CD8-positive, alpha-beta memory T cell (primary cell): ENCODE measurements at regions of chr2 and their contacts with region 1.

Region 1: DNA sequence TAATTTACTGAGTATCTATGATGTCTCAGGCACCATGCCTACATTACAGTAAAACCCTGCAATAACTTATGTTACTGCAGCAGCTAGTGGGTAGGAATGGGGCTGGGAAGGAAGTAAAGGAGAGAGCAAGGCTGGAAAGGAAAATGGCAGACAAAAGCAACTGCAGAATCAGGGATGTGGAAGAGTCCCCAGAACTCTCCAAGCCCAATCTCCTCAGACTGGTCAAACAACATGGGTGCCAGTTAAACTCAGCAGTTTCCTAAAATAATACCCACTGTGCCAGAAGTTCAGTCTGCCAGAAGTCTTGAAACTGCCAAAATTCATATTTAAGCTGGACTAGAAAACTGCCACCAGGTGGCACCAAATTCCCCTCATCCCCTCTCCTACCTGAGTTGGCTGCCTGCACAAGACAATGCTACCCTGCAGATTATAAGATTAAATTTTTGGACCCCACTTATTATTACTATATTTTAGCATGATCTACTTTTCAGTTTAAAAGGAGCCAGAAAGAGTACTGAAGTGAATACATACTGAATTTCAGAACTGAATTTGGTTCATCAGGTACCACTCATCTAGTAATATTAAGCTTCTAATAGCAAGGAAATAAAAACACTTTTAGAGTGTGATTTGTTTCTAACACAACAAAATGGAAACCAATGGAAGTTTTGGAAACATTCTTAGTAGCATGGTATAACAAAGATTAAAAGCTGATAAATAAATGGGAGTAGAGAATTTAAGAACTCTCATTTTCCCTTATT is 86.8 kb upstream of the DNER start:
- DNase-seq: peak; percentile 30 to 71 (median 52)
- H3K4me3 ChIP-seq: no peak overlapping the region
- H3K4me3 Mint-ChIP-seq: no peak overlapping the region
- H3K27ac ChIP-seq: no peak overlapping the region
- H3K27ac Mint-ChIP-seq: peak overlapping the region in 3 of 8 donors; percentile 35 to 49 (median 37)
- H3K4me1 ChIP-seq: no peaks in the 10 kb centered on the region
- H3K4me1 Mint-ChIP-seq: peaks cover 0 to 6% (median 5%) of the 10 kb centered on the region in 3 donors
- H3K27me3 ChIP-seq: no peaks in the 10 kb centered on the region
- H3K27me3 Mint-ChIP-seq: no peaks in the 10 kb centered on the region

Region 2: GRCh38 chr2:229653531-229653930 is 147.6 kb before region 1 on chr2:
- CTCF ChIA-PET with region 1: no interaction called
- POLR2A ChIA-PET with region 1: no interaction called
- DNase-seq: no peak
- H3K4me3 ChIP-seq: no peak overlapping the region
- H3K4me3 Mint-ChIP-seq: no peak overlapping the region
- H3K27ac ChIP-seq: no peak overlapping the region
- H3K27ac Mint-ChIP-seq: no peak overlapping the region
- H3K4me1 ChIP-seq: no peaks in the 10 kb centered on the region
- H3K4me1 Mint-ChIP-seq: no peaks in the 10 kb centered on the region
- H3K27me3 ChIP-seq: peaks cover 4% of the 10 kb centered on the region
- H3K27me3 Mint-ChIP-seq: peaks cover 5 to 29% of the 10 kb centered on the region in 2 donors

Region 3: GRCh38 chr2:229748950-229749349 is 52.2 kb before region 1 on chr2:
- CTCF ChIA-PET with region 1: no interaction called
- POLR2A ChIA-PET with region 1: no interaction called
- DNase-seq: no peak
- H3K4me3 ChIP-seq: no peak overlapping the region
- H3K4me3 Mint-ChIP-seq: no peak overlapping the region
- H3K27ac ChIP-seq: no peak overlapping the region
- H3K27ac Mint-ChIP-seq: no peak overlapping the region
- H3K4me1 ChIP-seq: no peaks in the 10 kb centered on the region
- H3K4me1 Mint-ChIP-seq: no peaks in the 10 kb centered on the region
- H3K27me3 ChIP-seq: no peaks in the 10 kb centered on the region
- H3K27me3 Mint-ChIP-seq: peaks cover 0 to 13% of the 10 kb centered on the region in 2 donors

Region 4: GRCh38 chr2:229815858-229816257 is 14.7 kb after region 1 on chr2:
- CTCF ChIA-PET with region 1: interaction called, 25 read pairs
- POLR2A ChIA-PET with region 1: no interaction called
- DNase-seq: no peak
- H3K4me3 ChIP-seq: no peak overlapping the region
- H3K4me3 Mint-ChIP-seq: no peak overlapping the region
- H3K27ac ChIP-seq: no peak overlapping the region
- H3K27ac Mint-ChIP-seq: peak overlapping the region in 1 of 8 donors; percentile 7
- H3K4me1 ChIP-seq: no peaks in the 10 kb centered on the region
- H3K4me1 Mint-ChIP-seq: peaks cover 2 to 11% (median 3%) of the 10 kb centered on the region in 3 donors
- H3K27me3 ChIP-seq: no peaks in the 10 kb centered on the region
- H3K27me3 Mint-ChIP-seq: no peaks in the 10 kb centered on the region

Region 5: DNA sequence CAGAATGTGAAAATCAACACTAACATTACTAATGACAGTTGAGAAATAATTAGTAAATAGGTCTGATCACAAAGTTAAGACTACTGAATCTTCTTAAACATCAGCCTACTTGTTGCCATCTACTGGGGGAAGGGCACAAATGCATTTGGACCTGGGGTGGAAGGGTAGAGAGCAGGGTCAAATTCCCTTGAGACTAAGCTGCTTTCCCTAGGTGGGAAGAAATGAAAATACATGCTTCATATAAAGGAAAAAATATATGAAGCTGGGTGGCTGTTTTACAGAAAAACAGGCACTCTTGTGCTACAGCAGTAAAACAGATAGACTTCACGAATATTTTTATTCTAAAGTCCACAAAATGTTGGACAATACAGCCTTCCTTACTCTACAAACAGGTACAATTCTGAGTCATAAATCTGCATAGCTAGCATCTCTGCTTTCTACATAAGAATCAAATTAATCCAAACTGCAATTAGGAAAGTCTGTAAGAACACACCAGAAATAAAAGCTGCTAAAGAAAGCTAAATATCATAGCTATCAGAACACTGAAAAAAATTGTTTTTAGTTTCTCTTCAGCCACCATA is 109.7 kb after region 1 on chr2:
- CTCF ChIA-PET with region 1: interaction called, 49 read pairs
- POLR2A ChIA-PET with region 1: no interaction called
- DNase-seq: peak in 1 of 5 donors; percentile 17
- H3K4me3 ChIP-seq: no peak overlapping the region
- H3K4me3 Mint-ChIP-seq: peak overlapping the region in 3 of 7 donors; percentile 4 to 24 (median 6)
- H3K27ac ChIP-seq: no peak overlapping the region
- H3K27ac Mint-ChIP-seq: peak overlapping the region in 7 of 8 donors; percentile 27 to 89 (median 64)
- H3K4me1 ChIP-seq: peaks cover 46% of the 10 kb centered on the region
- H3K4me1 Mint-ChIP-seq: peaks cover 47 to 73% (median 71%) of the 10 kb centered on the region in 3 donors
- H3K27me3 ChIP-seq: no peaks in the 10 kb centered on the region
- H3K27me3 Mint-ChIP-seq: no peaks in the 10 kb centered on the region